B cell (primary cell): ENCODE measurements at regions of chr9 and their contacts with region 1.

Region 1: DNA sequence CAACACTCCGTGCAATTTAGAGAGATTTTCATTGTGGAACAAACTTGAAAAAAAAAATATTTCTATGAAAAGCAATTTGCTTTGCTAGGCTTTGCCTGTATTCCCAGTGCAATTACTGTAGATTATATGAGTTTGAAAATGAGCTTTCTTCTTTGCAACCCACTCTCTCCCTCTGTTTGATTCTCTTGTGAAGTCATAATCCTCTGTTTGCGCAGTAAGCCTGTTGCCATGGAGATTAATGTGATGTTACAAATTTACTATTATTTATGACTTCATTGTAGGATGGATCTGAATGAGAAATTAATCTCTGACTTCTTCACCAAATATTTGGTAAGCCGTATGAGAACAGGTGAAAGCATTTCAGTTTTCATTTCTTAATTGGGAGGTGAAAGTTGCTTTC is 320.3 kb downstream of the SPATA31D1 start:
- DNase-seq: no peak
- ATAC-seq: no peak
- H3K4me3 ChIP-seq: no peak overlapping the region
- H3K4me3 Mint-ChIP-seq: no peak overlapping the region
- H3K27ac ChIP-seq: no peak overlapping the region
- H3K27ac Mint-ChIP-seq: no peak overlapping the region
- H3K4me1 ChIP-seq: no peaks in the 10 kb centered on the region
- H3K4me1 Mint-ChIP-seq: no peaks in the 10 kb centered on the region
- H3K27me3 ChIP-seq: no peaks in the 10 kb centered on the region
- H3K27me3 Mint-ChIP-seq: no peaks in the 10 kb centered on the region
- CTCF ChIP-seq: no peak

Region 2: DNA sequence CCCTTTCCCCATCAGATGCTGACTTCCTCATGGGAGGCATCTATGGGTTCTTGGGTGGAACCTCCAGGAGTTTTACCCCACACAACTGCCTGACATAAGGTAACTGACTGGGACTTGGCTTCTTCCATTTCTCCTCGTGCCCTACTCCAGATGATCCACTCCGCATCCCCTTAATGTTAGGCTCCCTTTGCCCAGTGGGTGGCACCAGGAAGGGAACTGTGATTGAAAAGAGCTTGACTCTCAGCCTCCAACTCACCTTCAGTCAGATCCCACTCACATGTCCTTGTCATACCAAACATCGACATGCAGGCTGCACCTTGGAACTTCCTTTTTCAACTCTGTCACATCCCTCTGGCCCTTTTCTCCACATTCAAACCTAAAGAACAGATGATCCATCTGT is 1151.6 kb before region 1 on chr9:
- CTCF ChIA-PET with region 1: no interaction called
- POLR2A ChIA-PET with region 1: no interaction called
- intact Hi-C with region 1: no loop called
- DNase-seq: no peak
- ATAC-seq: no peak
- H3K4me3 ChIP-seq: no peak overlapping the region
- H3K4me3 Mint-ChIP-seq: no peak overlapping the region
- H3K27ac ChIP-seq: no peak overlapping the region
- H3K27ac Mint-ChIP-seq: no peak overlapping the region
- H3K4me1 ChIP-seq: no peaks in the 10 kb centered on the region
- H3K4me1 Mint-ChIP-seq: no peaks in the 10 kb centered on the region
- H3K27me3 ChIP-seq: no peaks in the 10 kb centered on the region
- H3K27me3 Mint-ChIP-seq: no peaks in the 10 kb centered on the region
- CTCF ChIP-seq: no peak

Region 3: GRCh38 chr9:82209797-82210470 is 98.9 kb before region 1 on chr9:
- CTCF ChIA-PET with region 1: no interaction called
- POLR2A ChIA-PET with region 1: interaction called, 11 read pairs
- intact Hi-C with region 1: no loop called
- DNase-seq: no peak
- ATAC-seq: peak; percentile 43
- H3K4me3 ChIP-seq: no peak overlapping the region
- H3K4me3 Mint-ChIP-seq: no peak overlapping the region
- H3K27ac ChIP-seq: no peak overlapping the region
- H3K27ac Mint-ChIP-seq: no peak overlapping the region
- H3K4me1 ChIP-seq: peaks cover 7 to 12% of the 10 kb centered on the region in 2 donors
- H3K4me1 Mint-ChIP-seq: peaks cover 28% of the 10 kb centered on the region
- H3K27me3 ChIP-seq: no peaks in the 10 kb centered on the region
- H3K27me3 Mint-ChIP-seq: no peaks in the 10 kb centered on the region
- CTCF ChIP-seq: no peak